Caco-2 (cell line): ENCODE measurements at regions of chr1 and their contacts with region 1.

Region 1: DNA sequence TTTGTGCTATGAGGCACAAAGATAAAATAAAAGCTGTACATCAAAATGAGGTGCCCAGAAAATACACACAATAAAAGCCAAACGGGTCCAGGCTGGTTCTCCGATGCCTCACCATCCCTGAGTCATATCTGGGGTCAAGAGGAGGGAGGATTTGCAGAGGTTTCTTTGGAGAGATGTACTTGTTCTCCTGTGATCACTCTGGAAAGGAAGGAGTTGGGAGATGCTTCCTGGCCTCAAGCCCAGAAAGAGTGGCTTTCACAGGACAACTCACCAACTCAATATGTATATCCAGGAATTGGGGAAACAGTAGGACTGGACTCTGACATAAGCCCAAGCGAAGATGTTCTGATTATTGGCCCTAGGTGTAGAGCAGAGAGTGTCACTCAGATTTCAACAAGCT is 51.9 kb downstream of the DIPK1A start:
- DNase-seq: no peak
- H3K4me3 ChIP-seq: no peak overlapping the region
- H3K4me3 Mint-ChIP-seq: no peak overlapping the region
- H3K27ac Mint-ChIP-seq: no peak overlapping the region
- H3K4me1 ChIP-seq: peaks cover 11% of the 10 kb centered on the region; the same call in 1 of the 2 replicates
- H3K4me1 Mint-ChIP-seq: peaks cover 27% of the 10 kb centered on the region
- H3K27me3 ChIP-seq: no peaks in the 10 kb centered on the region
- H3K27me3 Mint-ChIP-seq: no peaks in the 10 kb centered on the region
- CTCF ChIP-seq: no peak

Region 2: GRCh38 chr1:92701147-92701546 is 208.2 kb before region 1 on chr1:
- CTCF ChIA-PET with region 1: no interaction called
- POLR2A ChIA-PET with region 1: no interaction called
- intact Hi-C with region 1: no loop called
- DNase-seq: peak in 1 of 2 experiments; percentile 12
- H3K4me3 ChIP-seq: no peak overlapping the region
- H3K4me3 Mint-ChIP-seq: no peak overlapping the region
- H3K27ac Mint-ChIP-seq: no peak overlapping the region
- H3K4me1 ChIP-seq: peaks cover 27% of the 10 kb centered on the region
- H3K4me1 Mint-ChIP-seq: peaks cover 6% of the 10 kb centered on the region
- H3K27me3 ChIP-seq: no peaks in the 10 kb centered on the region
- H3K27me3 Mint-ChIP-seq: no peaks in the 10 kb centered on the region
- CTCF ChIP-seq: no peak

Region 3: DNA sequence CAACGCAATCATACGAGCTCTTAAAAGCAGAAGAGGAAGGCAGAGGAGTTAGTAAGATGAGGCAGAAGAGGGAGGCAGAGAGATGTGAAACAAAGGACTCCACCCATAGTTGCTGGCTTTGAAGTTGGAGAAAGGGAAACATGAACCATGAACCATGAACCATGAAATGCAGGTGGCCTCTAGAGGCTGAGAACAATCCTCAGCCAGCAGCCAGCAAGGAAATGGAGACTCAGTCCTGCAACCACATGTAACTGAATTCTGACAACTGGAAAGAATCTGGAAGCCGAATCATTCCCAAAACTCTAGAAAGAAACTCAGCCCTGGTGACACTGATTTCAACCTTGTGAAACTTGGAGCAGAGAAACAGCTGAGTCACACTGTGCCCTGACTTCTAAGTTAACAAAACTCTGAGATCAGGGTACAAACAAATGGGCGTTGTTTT is 41.8 kb after region 1 on chr1:
- CTCF ChIA-PET with region 1: no interaction called
- POLR2A ChIA-PET with region 1: interaction called, 3 read pairs
- intact Hi-C with region 1: loop called (anchors 10 kb)
- DNase-seq: peak in 1 of 2 experiments; percentile 40
- H3K4me3 ChIP-seq: no peak overlapping the region
- H3K4me3 Mint-ChIP-seq: no peak overlapping the region
- H3K27ac Mint-ChIP-seq: no peak overlapping the region
- H3K4me1 ChIP-seq: peaks cover 25% of the 10 kb centered on the region
- H3K4me1 Mint-ChIP-seq: peaks cover 7% of the 10 kb centered on the region
- H3K27me3 ChIP-seq: no peaks in the 10 kb centered on the region
- H3K27me3 Mint-ChIP-seq: no peaks in the 10 kb centered on the region
- CTCF ChIP-seq: no peak